ENCODE measurements at regions of chr3 and their contacts with region 1.

Region 1: DNA sequence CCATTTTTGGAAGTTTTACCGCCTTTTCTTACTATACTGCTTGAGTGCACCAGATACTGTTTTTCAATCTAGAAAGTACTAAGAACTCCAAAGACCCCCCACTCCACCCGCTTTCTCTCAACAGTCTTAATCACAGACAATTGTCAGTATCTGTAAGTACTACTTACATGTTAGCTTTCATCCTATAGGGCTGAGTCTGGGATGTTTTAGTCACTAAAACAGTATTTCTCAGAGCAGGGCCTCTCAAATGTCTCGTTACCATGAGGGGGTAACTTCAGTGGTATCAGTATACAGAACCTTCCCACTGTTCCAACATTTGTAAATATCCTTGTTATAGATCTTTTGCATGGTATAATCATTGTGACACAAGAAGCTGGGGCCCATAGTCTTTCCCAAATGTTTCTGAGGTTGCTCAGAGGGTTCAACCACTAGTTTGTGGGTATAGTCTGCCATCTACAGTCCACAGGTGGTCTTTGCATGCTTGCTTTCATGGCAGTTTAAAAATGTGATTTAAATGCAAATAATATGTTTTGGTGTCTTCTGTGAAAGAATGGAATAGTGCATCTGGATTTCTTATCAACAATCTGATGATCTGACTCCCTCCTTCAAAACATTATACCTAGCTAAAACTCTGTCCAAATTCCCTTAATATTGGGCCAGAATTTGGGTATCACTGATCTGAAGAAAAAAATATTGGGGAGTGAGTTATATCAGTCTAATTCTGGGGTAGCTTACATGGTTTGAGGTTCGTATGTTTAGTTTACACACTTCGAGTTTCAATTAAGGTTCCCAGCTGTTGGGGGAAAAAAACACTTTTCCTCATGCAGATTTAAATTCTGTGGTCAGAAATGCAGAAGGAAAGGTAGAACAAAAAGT is 18.0 kb upstream of the DNAJC13 start:
- DNase-seq: peak; percentile 47
- H3K4me3 ChIP-seq: no peak overlapping the region
- H3K27ac ChIP-seq: no peak overlapping the region
- H3K4me1 ChIP-seq: no peaks in the 10 kb centered on the region
- H3K27me3 ChIP-seq: no peaks in the 10 kb centered on the region
- CTCF ChIP-seq: peak; percentile 85 to 86

Region 2: DNA sequence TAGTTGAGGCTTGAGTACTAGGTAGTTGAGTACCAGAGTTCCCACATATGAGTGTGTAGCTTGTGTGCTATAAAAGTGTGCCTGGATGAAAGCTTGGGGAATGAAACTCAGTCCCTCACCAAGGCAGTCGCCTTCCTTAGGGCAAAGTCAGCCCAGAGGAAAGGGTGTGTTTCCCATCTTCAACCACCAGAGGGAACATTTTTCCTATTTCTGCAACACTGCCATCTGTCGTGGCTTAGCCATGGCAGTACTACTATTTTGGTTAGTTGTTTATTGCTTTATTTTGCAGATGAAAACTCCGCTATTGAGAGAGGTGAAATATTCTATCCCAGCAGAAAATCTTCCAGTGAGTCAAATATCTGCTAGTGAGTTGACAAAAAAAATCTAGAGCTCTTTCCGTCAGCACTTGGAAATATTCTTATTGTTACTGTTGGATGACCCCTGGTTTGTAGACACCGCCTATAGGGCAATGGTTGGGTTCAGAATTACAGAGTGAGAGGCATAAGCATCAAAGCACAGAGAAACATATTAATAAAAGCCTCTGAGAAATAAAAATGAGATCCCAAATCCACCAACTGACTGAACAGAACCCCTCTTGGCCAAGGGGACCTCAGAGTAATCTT is 604.4 kb before region 1 on chr3:
- CTCF ChIA-PET with region 1: no interaction called
- dilution Hi-C with region 1: no loop called
- in situ Hi-C with region 1: no loop called
- intact Hi-C with region 1: loop called (anchors 5 kb)
- DNase-seq: peak; percentile 29
- H3K4me3 ChIP-seq: no peak overlapping the region
- H3K27ac ChIP-seq: no peak overlapping the region
- H3K4me1 ChIP-seq: no peaks in the 10 kb centered on the region
- H3K27me3 ChIP-seq: no peaks in the 10 kb centered on the region
- CTCF ChIP-seq: peak; percentile 89 to 95

Region 3: DNA sequence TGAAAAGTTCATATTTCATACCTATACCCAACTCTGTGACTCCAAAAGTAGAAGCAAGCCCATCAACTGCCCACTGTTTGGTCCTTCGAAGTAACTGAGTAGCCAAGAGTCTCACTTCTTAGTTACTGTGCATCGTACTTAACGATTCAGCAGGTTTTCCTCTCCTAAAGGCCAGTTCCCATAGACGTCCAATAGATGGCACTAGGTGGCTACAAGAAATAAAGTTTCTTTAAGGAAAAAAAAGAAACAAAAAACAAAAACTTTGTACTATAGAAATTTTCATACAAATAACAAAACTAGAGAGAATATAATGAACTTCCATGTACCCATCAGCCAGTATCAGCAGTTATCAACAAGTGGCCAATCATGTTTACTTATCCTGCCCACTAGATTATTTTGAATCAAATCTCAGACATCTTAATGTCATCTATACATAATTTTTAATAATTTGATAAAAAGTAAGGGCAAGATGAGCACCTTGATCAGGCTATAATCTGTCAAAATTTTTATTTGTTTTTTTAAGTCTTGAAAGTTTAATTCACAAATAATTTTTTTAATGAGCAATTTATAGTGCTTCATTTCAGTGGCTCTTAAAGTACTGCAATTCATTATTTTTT is 145.9 kb before region 1 on chr3:
- CTCF ChIA-PET with region 1: interaction called, 5 read pairs
- dilution Hi-C with region 1: no loop called
- in situ Hi-C with region 1: loop called (anchors 5 kb)
- intact Hi-C with region 1: loop called (anchors 1 kb)
- DNase-seq: peak; percentile 47
- H3K4me3 ChIP-seq: no peak overlapping the region
- H3K27ac ChIP-seq: no peak overlapping the region
- H3K4me1 ChIP-seq: peaks cover 7% of the 10 kb centered on the region
- H3K27me3 ChIP-seq: no peaks in the 10 kb centered on the region
- CTCF ChIP-seq: peak; percentile 77 to 78

Region 4: DNA sequence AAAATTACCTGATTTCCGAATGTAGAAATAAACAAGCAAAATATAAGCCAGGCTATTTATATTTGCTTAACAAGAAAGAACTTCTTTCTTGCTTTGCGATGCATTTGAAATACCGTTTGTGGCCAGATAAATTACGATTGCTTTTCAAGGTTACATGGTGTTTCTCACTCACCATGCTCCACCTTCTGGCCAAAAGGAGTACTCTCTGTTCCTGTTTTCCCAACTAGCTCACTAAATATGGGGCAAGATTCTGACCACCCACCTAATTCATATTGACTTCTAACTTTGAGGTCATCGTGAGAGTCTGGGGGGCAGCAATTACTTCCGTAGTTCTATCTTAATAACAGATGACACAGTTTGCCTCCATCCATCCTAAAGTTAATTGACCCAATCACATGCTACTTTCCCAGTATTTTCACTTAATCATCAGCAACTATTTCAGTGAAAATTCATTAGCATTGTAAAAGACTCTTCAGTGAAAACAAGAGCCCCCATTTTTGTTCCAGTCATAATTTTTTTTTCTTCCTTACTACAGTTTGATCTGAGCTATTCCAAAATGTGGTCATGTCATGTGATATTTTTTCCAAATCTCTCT is 56.2 kb before region 1 on chr3:
- CTCF ChIA-PET with region 1: no interaction called
- dilution Hi-C with region 1: no loop called
- in situ Hi-C with region 1: loop called (anchors 5 kb)
- intact Hi-C with region 1: no loop called
- DNase-seq: peak; percentile 41
- H3K4me3 ChIP-seq: no peak overlapping the region
- H3K27ac ChIP-seq: no peak overlapping the region
- H3K4me1 ChIP-seq: no peaks in the 10 kb centered on the region
- H3K27me3 ChIP-seq: no peaks in the 10 kb centered on the region
- CTCF ChIP-seq: peak; percentile 78 to 85

Region 5: GRCh38 chr3:132352541-132353143 is 46.6 kb before region 1 on chr3:
- CTCF ChIA-PET with region 1: interaction called, 4 read pairs
- dilution Hi-C with region 1: no loop called
- in situ Hi-C with region 1: loop called (anchors 5 kb)
- intact Hi-C with region 1: loop called (anchors 1 kb)
- DNase-seq: peak; percentile 53
- H3K4me3 ChIP-seq: no peak overlapping the region
- H3K27ac ChIP-seq: no peak overlapping the region
- H3K4me1 ChIP-seq: peaks cover 3% of the 10 kb centered on the region
- H3K27me3 ChIP-seq: no peaks in the 10 kb centered on the region
- CTCF ChIP-seq: peak; percentile 91 to 92

Region 6: DNA sequence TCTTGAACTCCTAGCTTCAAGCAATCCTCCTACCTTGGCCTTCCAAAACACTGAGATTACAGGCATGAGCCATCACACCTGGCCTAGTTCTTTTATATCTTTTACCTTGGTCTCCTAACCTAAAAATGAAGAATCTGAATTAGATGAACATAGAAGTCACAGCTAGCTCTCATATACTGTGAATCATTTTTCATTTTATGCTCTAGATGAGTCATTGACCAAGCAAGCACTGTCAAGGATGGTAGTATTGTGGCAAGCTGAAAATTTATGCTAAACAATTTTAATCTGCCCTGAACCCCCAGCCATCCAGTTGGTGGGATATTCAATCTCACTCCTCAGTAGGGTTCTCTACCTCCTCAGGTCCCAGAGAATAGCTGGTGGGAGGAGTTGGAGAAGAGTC is 30.3 kb before region 1 on chr3:
- CTCF ChIA-PET with region 1: no interaction called
- dilution Hi-C with region 1: no loop called
- in situ Hi-C with region 1: loop called in 1 of 2 experiments (anchors 5 kb)
- intact Hi-C with region 1: no loop called
- DNase-seq: no peak
- H3K4me3 ChIP-seq: no peak overlapping the region
- H3K27ac ChIP-seq: no peak overlapping the region
- H3K4me1 ChIP-seq: no peaks in the 10 kb centered on the region
- H3K27me3 ChIP-seq: no peaks in the 10 kb centered on the region
- CTCF ChIP-seq: no peak

Region 7: DNA sequence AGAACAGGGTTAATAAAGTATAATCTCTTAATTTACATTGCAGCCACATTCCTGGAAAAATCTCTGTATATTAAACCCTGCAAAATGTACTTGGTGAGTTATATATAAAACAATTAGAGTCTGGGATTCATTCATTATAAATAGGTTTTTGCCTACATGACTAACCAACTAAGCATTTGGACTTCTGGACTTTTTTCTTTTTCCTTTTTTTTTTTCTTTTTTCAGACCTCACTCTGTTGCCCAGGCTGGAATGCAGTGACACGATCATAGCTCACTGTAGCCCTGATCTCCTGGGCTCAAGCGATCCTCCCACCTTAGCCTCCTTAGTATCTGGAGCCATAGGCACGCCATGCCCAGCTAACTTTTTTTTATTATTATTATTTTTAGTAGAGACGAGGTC is 22.5 kb after region 1 on chr3:
- CTCF ChIA-PET with region 1: no interaction called
- dilution Hi-C with region 1: no loop called
- in situ Hi-C with region 1: no loop called
- intact Hi-C with region 1: no loop called
- DNase-seq: no peak
- H3K4me3 ChIP-seq: no peak overlapping the region
- H3K27ac ChIP-seq: no peak overlapping the region
- H3K4me1 ChIP-seq: peaks cover 12% of the 10 kb centered on the region
- H3K27me3 ChIP-seq: no peaks in the 10 kb centered on the region
- CTCF ChIP-seq: no peak

Region 8: GRCh38 chr3:132469326-132469725 is 70.0 kb after region 1 on chr3:
- CTCF ChIA-PET with region 1: no interaction called
- dilution Hi-C with region 1: no loop called
- in situ Hi-C with region 1: no loop called
- intact Hi-C with region 1: no loop called
- DNase-seq: no peak
- H3K4me3 ChIP-seq: no peak overlapping the region
- H3K27ac ChIP-seq: no peak overlapping the region
- H3K4me1 ChIP-seq: no peaks in the 10 kb centered on the region
- H3K27me3 ChIP-seq: no peaks in the 10 kb centered on the region
- CTCF ChIP-seq: no peak

Measured in mammary epithelial cell (primary cell).